Activated B cell treated with CpG ODN at 0.5 μM for 24 hours (primary cell): ENCODE measurements at regions of chr3 and their contacts with region 1.

Region 1: DNA sequence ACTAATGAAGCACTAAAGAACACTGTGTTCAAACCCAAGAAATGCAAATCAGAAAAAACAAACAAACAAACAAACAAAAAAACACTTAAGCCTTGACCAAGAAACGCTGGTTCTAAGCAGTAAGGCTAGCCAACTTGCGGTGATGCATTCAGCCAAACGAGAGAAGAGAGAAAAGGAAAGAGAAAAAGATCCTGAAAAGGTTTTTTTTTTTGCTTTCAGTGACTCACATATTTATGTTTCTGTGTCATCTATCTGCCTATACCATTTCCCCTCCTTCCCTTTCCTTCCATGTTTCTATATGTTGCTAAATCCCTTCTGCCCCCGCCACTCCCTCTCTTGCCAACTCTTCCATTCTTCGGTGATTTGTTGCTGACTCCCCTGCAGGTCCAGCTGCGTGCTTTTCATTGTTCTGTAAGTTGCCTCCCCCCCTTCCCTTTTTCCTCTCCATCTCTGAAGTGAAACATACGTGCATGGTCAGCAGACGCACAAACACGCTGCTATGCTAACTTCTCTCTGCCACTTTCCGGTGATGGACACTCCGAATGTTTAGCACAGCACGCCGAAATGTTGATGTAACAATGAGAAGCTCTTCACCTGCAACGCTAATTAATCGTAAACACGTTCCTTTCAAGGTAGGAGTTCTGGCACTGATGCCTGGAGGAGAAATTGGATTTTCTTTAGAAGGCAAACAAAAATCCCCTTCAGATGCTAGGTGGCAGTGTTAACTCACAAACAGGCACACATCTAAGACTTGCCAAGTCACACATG is 154.4 kb downstream of the TUSC7 start:
- DNase-seq: no peak
- ATAC-seq: no peak
- H3K4me3 Mint-ChIP-seq: no peak overlapping the region
- H3K27ac Mint-ChIP-seq: no peak overlapping the region
- H3K4me1 Mint-ChIP-seq: no peaks in the 10 kb centered on the region
- H3K27me3 Mint-ChIP-seq: no peaks in the 10 kb centered on the region
- CTCF ChIP-seq: no peak

Region 2: DNA sequence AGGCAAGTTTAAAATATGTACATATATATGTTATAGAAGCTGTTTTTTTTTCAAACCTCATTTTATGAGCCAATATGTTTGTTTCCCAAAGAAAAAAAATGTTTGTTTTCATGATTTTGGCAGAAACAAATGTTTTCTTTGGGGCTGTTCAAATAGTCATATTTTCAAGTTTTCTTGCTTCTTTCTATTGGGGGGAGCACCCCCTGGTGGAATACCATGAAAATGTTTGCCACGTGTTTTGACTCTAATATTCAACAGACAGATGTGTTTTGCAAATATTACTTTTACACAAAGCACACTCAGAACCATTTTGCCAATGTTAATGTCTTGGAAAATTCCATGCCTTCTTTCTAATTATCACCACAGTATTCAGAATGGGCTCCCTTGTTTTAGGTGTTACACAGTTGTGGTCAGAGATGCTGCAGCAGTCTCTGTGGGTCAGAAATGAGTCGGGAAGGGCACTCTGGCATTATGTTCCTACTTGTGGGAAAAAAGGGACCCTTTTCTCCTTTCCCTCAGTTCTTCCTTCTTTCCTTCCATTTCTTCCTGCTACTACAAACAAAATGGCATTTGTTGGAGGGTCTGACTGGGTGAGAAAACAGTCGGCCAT is 662.6 kb after region 1 on chr3:
- CTCF ChIA-PET with region 1: interaction called, 4 read pairs
- POLR2A ChIA-PET with region 1: no interaction called
- intact Hi-C with region 1: loop called (anchors 1 kb)
- DNase-seq: no peak
- ATAC-seq: no peak
- H3K4me3 Mint-ChIP-seq: no peak overlapping the region
- H3K27ac Mint-ChIP-seq: no peak overlapping the region
- H3K4me1 Mint-ChIP-seq: no peaks in the 10 kb centered on the region
- H3K27me3 Mint-ChIP-seq: no peaks in the 10 kb centered on the region
- CTCF ChIP-seq: no peak

Region 3: GRCh38 chr3:117719316-117719926 is 855.4 kb after region 1 on chr3:
- CTCF ChIA-PET with region 1: interaction called, 3 read pairs
- POLR2A ChIA-PET with region 1: no interaction called
- intact Hi-C with region 1: loop called (anchors 1 kb)
- DNase-seq: no peak
- ATAC-seq: no peak
- H3K4me3 Mint-ChIP-seq: no peak overlapping the region
- H3K27ac Mint-ChIP-seq: no peak overlapping the region
- H3K4me1 Mint-ChIP-seq: peaks cover 11% of the 10 kb centered on the region
- H3K27me3 Mint-ChIP-seq: no peaks in the 10 kb centered on the region
- CTCF ChIP-seq: peak; percentile 41